ENCODE measurements at regions of chr1 and their contacts with region 1.

Region 1: DNA sequence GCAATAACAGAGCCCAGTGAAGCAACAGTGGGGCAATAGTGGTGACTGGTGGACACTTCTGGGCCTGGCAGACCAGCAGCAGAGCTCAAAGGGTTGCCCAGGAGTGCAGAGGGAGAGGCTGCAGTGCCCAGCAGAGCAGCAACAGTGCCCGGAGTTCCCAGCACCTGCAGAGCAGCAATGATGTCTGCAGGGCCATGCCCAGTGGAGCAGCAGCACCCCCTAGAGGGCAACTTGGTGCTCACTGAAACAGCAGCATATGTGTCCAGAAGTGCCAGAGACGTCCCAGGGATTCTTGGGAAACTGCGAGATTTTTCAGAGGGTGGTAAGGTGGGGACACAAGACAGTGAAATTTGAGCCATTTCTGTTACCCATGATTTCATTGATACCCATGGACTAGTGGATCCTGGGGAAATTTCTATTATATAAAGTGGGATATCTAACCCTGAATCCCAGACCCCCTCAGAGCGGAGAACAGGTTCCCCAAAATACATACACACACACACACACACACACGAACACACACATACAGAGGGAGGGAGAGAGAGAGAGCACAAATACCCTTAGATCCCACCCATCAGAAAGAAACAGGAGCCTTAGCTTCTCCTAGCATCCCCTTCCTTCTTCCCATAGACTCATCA is 156.9 kb upstream of the GJB5 start:
- DNase-seq: peak; percentile 32
- ATAC-seq: peak; percentile 94
- H3K4me3 ChIP-seq: no peak overlapping the region
- H3K27ac ChIP-seq: no peak overlapping the region
- H3K4me1 ChIP-seq: no peaks in the 10 kb centered on the region
- H3K27me3 ChIP-seq: peaks cover 0 to 1% of the 10 kb centered on the region in 2 experiments; a peak in 1 of 5 replicates
- CTCF ChIP-seq: peak; percentile 93
- EP300 ChIP-seq: no peak
- POLR2A ChIP-seq: no peak
- RAD21 ChIP-seq: peak; percentile 85

Region 2: GRCh38 chr1:33633019-33633801 is 964.8 kb before region 1 on chr1:
- CTCF ChIA-PET with region 1: interaction called, 10 read pairs
- POLR2A ChIA-PET with region 1: no interaction called
- in situ Hi-C with region 1: loop called (anchors 10 kb)
- intact Hi-C with region 1: loop called (anchors 1 kb)
- DNase-seq: peak; percentile 76
- ATAC-seq: peak; percentile 96
- H3K4me3 ChIP-seq: peak overlapping the region in 1 of 3 experiments; percentile 48; a peak in 1 of 6 replicates
- H3K27ac ChIP-seq: no peak overlapping the region
- H3K4me1 ChIP-seq: no peaks in the 10 kb centered on the region
- H3K27me3 ChIP-seq: peaks cover 8 to 53% of the 10 kb centered on the region in 2 experiments
- CTCF ChIP-seq: peak; percentile 94
- EP300 ChIP-seq: no peak
- POLR2A ChIP-seq: no peak
- RAD21 ChIP-seq: peak; percentile 65

Region 3: DNA sequence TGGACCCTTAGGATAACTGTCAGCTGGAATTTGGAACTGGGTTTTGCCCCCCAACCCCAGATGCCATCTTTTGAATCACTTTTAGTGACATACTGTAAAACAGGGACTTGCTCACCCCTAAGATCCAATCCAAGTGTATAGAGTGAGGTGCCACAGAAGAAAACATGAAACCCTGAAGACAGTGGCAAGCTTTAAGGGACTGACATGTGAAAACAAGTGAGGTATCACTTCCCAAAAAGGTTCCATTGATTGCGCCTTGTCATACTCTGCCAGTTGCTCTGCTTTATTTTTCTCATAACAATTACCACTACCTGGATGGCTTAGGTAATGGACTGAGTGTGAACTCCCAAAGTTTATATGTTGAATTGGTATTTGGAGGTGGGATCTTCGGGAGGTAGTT is 548.5 kb before region 1 on chr1:
- CTCF ChIA-PET with region 1: no interaction called
- POLR2A ChIA-PET with region 1: no interaction called
- in situ Hi-C with region 1: no loop called
- intact Hi-C with region 1: no loop called
- DNase-seq: no peak
- ATAC-seq: no peak
- H3K4me3 ChIP-seq: no peak overlapping the region
- H3K27ac ChIP-seq: no peak overlapping the region
- H3K4me1 ChIP-seq: no peaks in the 10 kb centered on the region
- H3K27me3 ChIP-seq: no peaks in the 10 kb centered on the region
- CTCF ChIP-seq: no peak
- EP300 ChIP-seq: no peak
- POLR2A ChIP-seq: no peak
- RAD21 ChIP-seq: no peak

Region 4: GRCh38 chr1:34113887-34114286 is 484.1 kb before region 1 on chr1:
- CTCF ChIA-PET with region 1: interaction called, 15 read pairs
- POLR2A ChIA-PET with region 1: no interaction called
- in situ Hi-C with region 1: loop called (anchors 10 kb)
- intact Hi-C with region 1: loop called (anchors 5 kb)
- DNase-seq: peak; percentile 10
- ATAC-seq: no peak
- H3K4me3 ChIP-seq: no peak overlapping the region
- H3K27ac ChIP-seq: no peak overlapping the region
- H3K4me1 ChIP-seq: no peaks in the 10 kb centered on the region
- H3K27me3 ChIP-seq: no peaks in the 10 kb centered on the region
- CTCF ChIP-seq: peak; percentile 22; the same call in 1 of the 2 replicates
- EP300 ChIP-seq: no peak
- POLR2A ChIP-seq: no peak
- RAD21 ChIP-seq: no peak

Region 5: GRCh38 chr1:34460193-34460592 is 137.8 kb before region 1 on chr1:
- CTCF ChIA-PET with region 1: interaction called, 13 read pairs
- POLR2A ChIA-PET with region 1: no interaction called
- in situ Hi-C with region 1: loop called (anchors 5 kb)
- intact Hi-C with region 1: loop called (anchors 1 kb)
- DNase-seq: peak; percentile 21
- ATAC-seq: no peak; the same call in 2 of the 3 replicates
- H3K4me3 ChIP-seq: no peak overlapping the region
- H3K27ac ChIP-seq: no peak overlapping the region
- H3K4me1 ChIP-seq: no peaks in the 10 kb centered on the region
- H3K27me3 ChIP-seq: peaks cover 0 to under 1% of the 10 kb centered on the region in 2 experiments; a peak in 1 of 5 replicates
- CTCF ChIP-seq: peak; percentile 69
- EP300 ChIP-seq: no peak
- POLR2A ChIP-seq: no peak
- RAD21 ChIP-seq: no peak

Region 6: DNA sequence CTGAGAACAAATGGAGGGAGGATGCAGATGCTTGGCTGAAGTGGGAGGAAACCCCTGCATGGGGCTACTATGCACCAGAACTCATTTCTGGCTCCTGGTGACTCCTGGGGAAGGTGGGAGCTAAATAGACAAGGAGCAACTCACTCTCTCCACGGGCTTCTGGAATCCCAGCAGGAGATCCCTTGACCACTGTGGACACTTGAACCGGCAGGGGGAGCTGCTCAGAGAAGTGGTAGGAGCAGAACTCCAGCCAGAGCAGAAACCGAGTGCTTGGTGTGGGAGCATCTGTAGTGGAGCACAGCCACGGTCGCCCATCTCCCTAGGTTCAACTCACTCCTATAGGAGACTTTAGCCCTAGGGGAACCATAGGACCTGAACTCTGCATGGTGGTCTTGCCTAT is 48.8 kb before region 1 on chr1:
- CTCF ChIA-PET with region 1: interaction called, 10 read pairs
- POLR2A ChIA-PET with region 1: no interaction called
- in situ Hi-C with region 1: no loop called
- intact Hi-C with region 1: loop called (anchors 1 kb)
- DNase-seq: peak; percentile 37
- ATAC-seq: peak; percentile 82
- H3K4me3 ChIP-seq: no peak overlapping the region
- H3K27ac ChIP-seq: no peak overlapping the region
- H3K4me1 ChIP-seq: no peaks in the 10 kb centered on the region
- H3K27me3 ChIP-seq: no peaks in the 10 kb centered on the region
- CTCF ChIP-seq: peak; percentile 53
- EP300 ChIP-seq: no peak
- POLR2A ChIP-seq: no peak
- RAD21 ChIP-seq: no peak

Region 7: GRCh38 chr1:34612091-34612827 is 14.3 kb after region 1 on chr1:
- CTCF ChIA-PET with region 1: no interaction called
- POLR2A ChIA-PET with region 1: no interaction called
- in situ Hi-C with region 1: no loop called
- intact Hi-C with region 1: no loop called
- DNase-seq: no peak
- ATAC-seq: no peak
- H3K4me3 ChIP-seq: no peak overlapping the region
- H3K27ac ChIP-seq: no peak overlapping the region
- H3K4me1 ChIP-seq: no peaks in the 10 kb centered on the region
- H3K27me3 ChIP-seq: no peaks in the 10 kb centered on the region
- CTCF ChIP-seq: no peak
- EP300 ChIP-seq: no peak
- POLR2A ChIP-seq: no peak
- RAD21 ChIP-seq: no peak

Measured in HepG2 (cell line).